BJ (cell line): ENCODE measurements at regions of chr1 and their contacts with region 1.

Region 1: DNA sequence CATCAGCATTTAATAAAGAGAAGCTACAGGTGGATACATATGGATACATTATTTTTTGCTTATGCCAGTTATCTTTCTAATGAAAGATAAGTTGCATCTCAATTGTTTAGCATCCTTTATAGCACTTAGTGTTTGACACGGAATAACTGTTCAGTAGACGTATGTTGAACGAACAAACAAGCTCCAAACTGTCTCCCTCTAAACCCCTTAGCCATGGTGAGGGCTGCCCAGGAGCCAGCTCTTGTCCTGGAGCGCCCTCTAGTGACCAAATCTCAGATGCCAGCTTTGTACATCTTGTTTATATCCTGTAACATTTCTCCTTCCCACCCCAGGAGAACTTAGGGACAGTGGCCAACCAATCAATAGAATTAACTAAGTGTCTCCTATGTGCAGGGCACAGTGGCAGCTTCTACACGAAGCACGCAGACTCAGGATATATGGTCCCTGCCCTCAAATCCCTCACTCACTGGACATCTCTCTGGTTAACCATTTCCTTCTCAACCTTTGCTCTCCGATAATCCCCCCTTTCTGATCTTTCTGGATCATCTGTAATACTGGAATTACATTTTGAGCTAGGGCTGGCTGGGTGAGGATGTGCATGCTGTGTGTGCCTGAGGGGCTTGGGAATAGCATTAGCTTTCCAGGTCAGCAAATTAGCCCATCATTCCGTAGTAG is 22.9 kb downstream of the KCNA10 start:
- DNase-seq: peak; percentile 19
- H3K4me3 ChIP-seq: no peak overlapping the region
- H3K27me3 ChIP-seq: peaks cover 10% of the 10 kb centered on the region
- CTCF ChIP-seq: peak; percentile 95

Region 2: DNA sequence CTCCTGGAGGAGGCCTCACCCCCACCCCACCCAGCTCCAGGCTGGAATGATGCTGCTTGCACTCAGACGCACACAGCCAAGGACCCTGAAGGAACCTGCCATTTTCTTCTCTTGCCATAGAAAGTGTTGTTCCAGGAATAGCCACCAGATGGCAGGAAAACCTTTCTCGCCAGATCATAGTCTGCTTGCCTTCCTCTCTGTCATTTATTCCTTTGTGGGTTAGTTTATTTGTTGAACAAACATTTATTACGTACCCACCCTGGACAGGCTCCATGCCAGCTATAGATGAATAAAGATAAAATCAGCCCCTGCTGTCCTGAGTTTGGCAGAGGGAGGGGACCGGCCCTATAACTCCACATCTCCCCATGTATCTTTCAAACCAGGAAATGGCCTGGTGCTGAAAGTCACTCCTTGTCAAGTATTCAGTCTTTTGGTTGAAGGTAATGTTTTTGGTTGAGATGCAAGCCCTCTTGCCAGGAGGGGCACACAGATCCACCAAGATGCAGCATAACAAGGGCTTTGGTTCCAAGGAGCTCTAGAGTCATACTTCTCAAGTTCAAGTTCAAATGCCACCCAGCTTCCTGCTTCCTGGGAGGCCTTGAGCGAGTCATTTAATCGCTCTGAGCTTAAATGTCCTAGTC is 292.9 kb before region 1 on chr1:
- CTCF ChIA-PET with region 1: interaction called, 101 read pairs
- POLR2A ChIA-PET with region 1: no interaction called
- DNase-seq: no peak
- H3K4me3 ChIP-seq: no peak overlapping the region
- H3K27me3 ChIP-seq: no peaks in the 10 kb centered on the region
- CTCF ChIP-seq: peak; percentile 79

Region 3: GRCh38 chr1:110338886-110339406 is 157.1 kb before region 1 on chr1 and contains the start of gene RBM15:
- CTCF ChIA-PET with region 1: interaction called, 11 read pairs
- POLR2A ChIA-PET with region 1: no interaction called
- DNase-seq: peak; percentile 100
- H3K4me3 ChIP-seq: peak within 1 kb of the TSS; percentile 96
- H3K27me3 ChIP-seq: no peaks in the 10 kb centered on the region
- CTCF ChIP-seq: no peak
- polyA plus RNA-seq, gene RBM15: 9.7 and 10.2 TPM in 2 replicates

Region 4: GRCh38 chr1:110380672-110381283 is 115.3 kb before region 1 on chr1:
- CTCF ChIA-PET with region 1: no interaction called
- POLR2A ChIA-PET with region 1: no interaction called
- DNase-seq: no peak
- H3K4me3 ChIP-seq: no peak overlapping the region
- H3K27me3 ChIP-seq: no peaks in the 10 kb centered on the region
- CTCF ChIP-seq: no peak

Region 5: DNA sequence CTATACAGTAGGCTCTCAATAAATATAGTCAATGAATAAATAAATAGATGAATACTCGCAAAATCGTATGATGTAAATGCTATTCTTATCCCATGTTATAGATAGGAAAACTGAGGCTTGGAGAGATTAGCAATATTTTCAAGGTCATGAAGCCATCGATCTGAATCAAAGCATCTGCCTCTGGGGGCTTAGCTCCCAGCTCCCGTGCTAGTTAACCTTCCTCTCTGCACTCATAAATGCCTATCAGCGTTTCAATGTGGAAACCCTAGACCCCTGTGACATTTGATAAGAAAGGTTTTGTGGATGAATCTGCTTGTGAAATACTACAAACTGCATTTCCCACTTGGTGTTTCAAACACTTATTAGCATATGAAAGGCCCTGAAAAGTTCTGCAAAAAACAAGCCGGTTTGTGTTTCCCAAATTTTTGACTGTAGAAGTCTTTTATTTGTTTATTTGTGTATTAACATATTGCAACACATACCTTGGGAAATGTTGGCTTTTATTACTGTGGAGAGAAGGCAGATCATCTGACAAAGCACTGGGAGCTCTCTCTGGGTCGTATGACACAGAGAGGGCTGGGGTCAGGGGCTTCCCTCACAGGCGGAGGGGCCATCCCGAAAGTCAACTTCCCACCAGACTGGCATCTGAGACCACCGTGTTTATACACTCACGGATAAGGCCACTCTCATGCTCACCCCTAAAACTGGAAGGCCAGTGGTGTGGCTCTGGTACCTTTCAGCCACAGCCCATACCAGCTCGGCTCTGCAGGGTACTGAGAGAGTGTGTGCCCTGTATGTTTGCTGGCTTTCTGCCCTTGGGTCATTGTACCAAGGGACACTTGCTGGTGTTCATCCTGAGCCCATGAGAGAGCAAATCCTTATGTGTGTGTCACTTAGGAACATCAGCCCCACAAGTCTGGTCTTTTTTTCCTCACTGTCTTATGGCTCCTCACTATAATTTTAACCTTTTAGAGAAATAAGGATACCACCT is 46.1 kb before region 1 on chr1:
- CTCF ChIA-PET with region 1: interaction called, 16 read pairs
- POLR2A ChIA-PET with region 1: no interaction called
- DNase-seq: no peak
- H3K4me3 ChIP-seq: no peak overlapping the region
- H3K27me3 ChIP-seq: peaks cover 40% of the 10 kb centered on the region
- CTCF ChIP-seq: no peak

Region 6: DNA sequence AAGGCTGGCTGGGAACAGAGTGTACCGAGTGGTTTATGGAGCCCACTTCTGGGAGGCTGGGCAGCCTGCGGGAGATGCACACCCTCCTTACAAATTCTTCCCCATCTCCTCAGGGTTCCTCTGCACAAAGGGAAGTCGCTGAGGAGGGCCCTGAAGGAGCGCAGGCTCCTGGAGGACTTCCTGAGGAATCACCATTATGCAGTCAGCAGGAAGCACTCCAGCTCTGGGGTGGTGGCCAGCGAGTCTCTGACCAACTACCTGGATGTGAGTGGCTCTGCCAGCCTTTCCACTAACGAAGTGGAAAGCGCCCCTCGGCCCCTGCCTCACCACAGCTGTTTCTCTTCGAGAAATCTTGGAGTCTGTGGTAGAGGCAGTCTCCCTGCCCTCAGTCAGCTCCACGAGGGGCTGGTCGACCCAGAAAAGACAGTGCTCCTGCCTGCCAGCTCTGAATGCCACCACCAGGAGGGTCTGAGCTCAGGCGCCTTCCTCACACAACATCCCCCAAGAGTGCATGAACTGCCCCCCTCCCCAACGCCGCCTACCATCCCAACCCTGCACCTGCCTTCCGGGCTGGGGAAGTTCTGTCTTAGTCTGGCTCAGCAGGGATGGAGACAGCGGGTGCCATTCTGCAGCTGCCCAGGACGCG is 13.3 kb before region 1 on chr1:
- CTCF ChIA-PET with region 1: interaction called, 68 read pairs
- POLR2A ChIA-PET with region 1: no interaction called
- DNase-seq: no peak
- H3K4me3 ChIP-seq: no peak overlapping the region
- H3K27me3 ChIP-seq: peaks cover 13% of the 10 kb centered on the region
- CTCF ChIP-seq: no peak

Region 7: DNA sequence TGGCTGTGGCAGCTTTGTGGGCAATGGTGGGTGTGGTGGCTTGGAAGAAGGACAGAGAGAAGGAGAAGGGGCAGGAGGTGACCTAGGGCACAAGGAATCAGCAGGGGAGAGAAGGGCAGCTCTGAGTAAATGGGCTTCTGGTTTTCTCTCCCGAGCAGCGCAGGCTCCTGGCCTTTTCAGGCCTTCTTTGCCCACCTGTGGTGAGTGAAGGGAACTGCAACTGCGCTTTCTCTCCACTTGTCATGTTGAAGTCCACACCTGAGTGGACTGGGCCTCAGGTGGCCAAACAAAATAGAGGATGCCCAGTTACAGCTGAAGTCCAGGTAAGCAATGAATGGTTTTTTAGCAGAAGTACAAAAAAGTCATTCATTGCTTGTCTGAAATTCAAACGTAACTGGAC is 52.3 kb after region 1 on chr1:
- CTCF ChIA-PET with region 1: no interaction called
- POLR2A ChIA-PET with region 1: no interaction called
- DNase-seq: no peak
- H3K4me3 ChIP-seq: no peak overlapping the region
- H3K27me3 ChIP-seq: peaks cover 6% of the 10 kb centered on the region; the same call in 1 of the 2 replicates
- CTCF ChIP-seq: peak; percentile 46